ENCODE measurements at regions of chr1 and their contacts with region 1.

Region 1: GRCh38 chr1:43934101-43934985 is 742 bp downstream of the ARTN start:
- DNase-seq: peak; percentile 72
- H3K4me3 Mint-ChIP-seq: peak overlapping the region; percentile 36
- H3K27ac Mint-ChIP-seq: no peak overlapping the region
- H3K4me1 Mint-ChIP-seq: peaks cover 14% of the 10 kb centered on the region
- H3K27me3 Mint-ChIP-seq: peaks cover 34% of the 10 kb centered on the region

Region 2: DNA sequence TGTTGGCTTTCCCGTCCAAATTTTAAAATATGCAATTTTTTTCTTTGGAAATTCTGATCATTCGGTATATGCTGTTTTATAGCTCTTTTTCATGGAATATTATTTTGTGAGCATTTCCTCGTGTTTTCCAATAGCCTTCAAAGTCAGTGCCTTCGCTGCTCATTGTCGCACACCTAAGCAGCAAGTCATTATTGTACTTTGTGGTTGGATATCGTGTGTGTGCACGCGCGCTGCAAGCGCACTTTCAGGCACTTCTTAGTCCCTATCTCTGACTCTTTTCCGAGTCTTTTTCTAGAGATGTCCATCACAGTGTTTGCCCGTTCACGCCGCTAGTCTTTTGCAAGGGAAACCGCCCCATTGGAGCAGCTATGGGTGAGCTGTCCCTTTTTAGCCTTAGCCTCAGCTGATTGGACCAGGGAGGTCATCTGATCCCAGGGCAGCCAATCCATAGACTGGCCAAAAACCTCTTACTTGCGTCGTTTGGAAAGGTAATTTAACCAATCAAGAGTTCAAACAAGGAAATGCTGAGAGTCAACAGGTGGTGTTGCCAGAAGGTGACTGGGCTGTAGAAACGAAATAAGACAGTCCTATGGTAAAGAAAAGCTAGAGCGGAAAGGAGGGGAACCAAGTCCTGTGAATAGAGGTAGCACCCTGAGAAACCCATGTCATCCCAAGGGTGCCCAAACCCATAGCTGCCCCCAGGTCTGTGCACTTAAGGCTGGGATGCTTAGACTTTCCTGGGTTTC is 479.9 kb before region 1 on chr1:
- CTCF ChIA-PET with region 1: no interaction called
- intact Hi-C with region 1: loop called (anchors 10 kb)
- DNase-seq: peak; percentile 77
- H3K4me3 Mint-ChIP-seq: peak overlapping the region; percentile 83
- H3K27ac Mint-ChIP-seq: peak overlapping the region; percentile 81
- H3K4me1 Mint-ChIP-seq: peaks cover 13% of the 10 kb centered on the region
- H3K27me3 Mint-ChIP-seq: peaks cover 13% of the 10 kb centered on the region

Region 3: DNA sequence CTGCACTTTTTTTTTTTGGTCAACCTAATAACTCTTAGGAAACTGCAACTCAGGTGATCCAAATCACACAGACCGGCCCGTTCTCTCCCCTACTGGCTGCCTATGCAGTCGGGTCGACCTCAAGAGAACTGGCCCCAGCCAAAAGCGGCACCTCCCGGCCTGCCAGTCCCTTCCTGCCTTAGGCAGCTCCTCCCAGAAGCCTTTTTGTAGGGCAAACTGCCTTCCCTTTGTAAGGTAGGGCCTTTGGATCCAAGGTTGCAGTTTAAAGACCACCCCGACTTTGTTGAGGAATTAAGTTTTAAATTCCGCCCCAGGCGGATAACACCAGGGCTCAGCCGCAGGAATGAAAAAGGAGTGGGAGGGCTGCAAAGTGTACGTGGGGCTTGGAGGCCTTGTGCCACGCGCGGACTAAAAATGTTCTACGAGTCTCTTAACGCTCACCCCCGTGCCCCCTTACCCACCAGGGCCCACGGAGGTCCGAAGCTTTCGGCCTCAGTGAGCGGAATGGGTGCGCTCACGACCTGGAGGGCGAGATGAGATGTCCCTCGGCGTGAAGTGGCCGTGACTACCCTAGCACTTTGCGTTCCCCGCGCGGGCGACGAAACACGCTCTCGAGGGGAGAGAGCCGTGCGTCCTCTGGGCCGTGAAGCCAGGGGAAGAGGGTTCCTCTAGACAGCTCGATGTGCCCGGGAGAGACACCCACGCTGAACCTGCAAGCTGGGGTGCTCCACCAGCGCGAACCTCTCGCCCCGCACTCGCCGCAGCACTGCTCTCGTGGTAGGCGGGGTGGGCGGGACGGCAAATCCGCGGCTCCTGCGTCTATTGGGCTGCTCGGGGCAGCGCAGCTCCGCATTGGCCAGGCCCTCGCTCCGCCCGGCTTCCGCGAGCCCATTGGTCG is 227.5 kb before region 1 on chr1:
- CTCF ChIA-PET with region 1: interaction called, 7 read pairs
- intact Hi-C with region 1: loop called (anchors 2 kb)
- DNase-seq: peak; percentile 94
- H3K4me3 Mint-ChIP-seq: peak overlapping the region; percentile 86
- H3K27ac Mint-ChIP-seq: peak overlapping the region; percentile 53
- H3K4me1 Mint-ChIP-seq: peaks cover 30% of the 10 kb centered on the region
- H3K27me3 Mint-ChIP-seq: no peaks in the 10 kb centered on the region

Region 4: GRCh38 chr1:43836267-43836951 is 97.9 kb before region 1 on chr1:
- CTCF ChIA-PET with region 1: interaction called, 3 read pairs
- intact Hi-C with region 1: loop called (anchors 5 kb)
- DNase-seq: peak; percentile 75
- H3K4me3 Mint-ChIP-seq: no peak overlapping the region
- H3K27ac Mint-ChIP-seq: peak overlapping the region; percentile 12
- H3K4me1 Mint-ChIP-seq: peaks cover 52% of the 10 kb centered on the region
- H3K27me3 Mint-ChIP-seq: no peaks in the 10 kb centered on the region

Region 5: GRCh38 chr1:44036409-44037139 is 102.2 kb after region 1 on chr1:
- CTCF ChIA-PET with region 1: interaction called, 11 read pairs
- intact Hi-C with region 1: no loop called
- DNase-seq: peak; percentile 88
- H3K4me3 Mint-ChIP-seq: no peak overlapping the region
- H3K27ac Mint-ChIP-seq: no peak overlapping the region
- H3K4me1 Mint-ChIP-seq: peaks cover 8% of the 10 kb centered on the region
- H3K27me3 Mint-ChIP-seq: no peaks in the 10 kb centered on the region

Region 6: GRCh38 chr1:44170281-44170823 is 236.0 kb after region 1 on chr1:
- CTCF ChIA-PET with region 1: no interaction called
- intact Hi-C with region 1: no loop called
- DNase-seq: no peak
- H3K4me3 Mint-ChIP-seq: no peak overlapping the region
- H3K27ac Mint-ChIP-seq: no peak overlapping the region
- H3K4me1 Mint-ChIP-seq: no peaks in the 10 kb centered on the region
- H3K27me3 Mint-ChIP-seq: peaks cover 4% of the 10 kb centered on the region

Region 7: DNA sequence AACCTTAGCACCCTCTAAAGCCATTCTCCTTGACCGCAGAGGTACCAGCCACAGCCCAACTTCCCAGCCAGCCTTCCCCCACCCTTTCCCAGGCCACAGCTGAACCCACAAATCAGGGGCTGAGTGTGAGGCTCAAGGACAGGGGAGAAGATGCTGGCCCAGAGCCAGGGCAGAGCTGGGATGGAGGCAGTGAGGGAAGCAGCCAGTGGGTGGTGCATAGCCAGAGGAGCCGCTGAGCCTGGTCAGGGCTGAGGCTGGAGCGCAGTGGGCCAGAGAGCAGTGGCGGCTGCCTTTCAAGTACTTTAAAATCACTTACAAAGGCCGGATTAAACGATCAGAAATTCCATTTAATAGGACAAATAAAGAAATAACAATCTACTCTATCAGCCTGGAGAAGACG is 315.2 kb after region 1 on chr1:
- CTCF ChIA-PET with region 1: no interaction called
- intact Hi-C with region 1: no loop called
- DNase-seq: no peak
- H3K4me3 Mint-ChIP-seq: no peak overlapping the region
- H3K27ac Mint-ChIP-seq: no peak overlapping the region
- H3K4me1 Mint-ChIP-seq: no peaks in the 10 kb centered on the region
- H3K27me3 Mint-ChIP-seq: no peaks in the 10 kb centered on the region

Measured in activated naive CD4-positive, alpha-beta T cell treated with anti-CD3 and anti-CD28 coated beads for 36 hours (primary cell).